ENCODE measurements at regions of chr6 and their contacts with region 1.

Region 1: DNA sequence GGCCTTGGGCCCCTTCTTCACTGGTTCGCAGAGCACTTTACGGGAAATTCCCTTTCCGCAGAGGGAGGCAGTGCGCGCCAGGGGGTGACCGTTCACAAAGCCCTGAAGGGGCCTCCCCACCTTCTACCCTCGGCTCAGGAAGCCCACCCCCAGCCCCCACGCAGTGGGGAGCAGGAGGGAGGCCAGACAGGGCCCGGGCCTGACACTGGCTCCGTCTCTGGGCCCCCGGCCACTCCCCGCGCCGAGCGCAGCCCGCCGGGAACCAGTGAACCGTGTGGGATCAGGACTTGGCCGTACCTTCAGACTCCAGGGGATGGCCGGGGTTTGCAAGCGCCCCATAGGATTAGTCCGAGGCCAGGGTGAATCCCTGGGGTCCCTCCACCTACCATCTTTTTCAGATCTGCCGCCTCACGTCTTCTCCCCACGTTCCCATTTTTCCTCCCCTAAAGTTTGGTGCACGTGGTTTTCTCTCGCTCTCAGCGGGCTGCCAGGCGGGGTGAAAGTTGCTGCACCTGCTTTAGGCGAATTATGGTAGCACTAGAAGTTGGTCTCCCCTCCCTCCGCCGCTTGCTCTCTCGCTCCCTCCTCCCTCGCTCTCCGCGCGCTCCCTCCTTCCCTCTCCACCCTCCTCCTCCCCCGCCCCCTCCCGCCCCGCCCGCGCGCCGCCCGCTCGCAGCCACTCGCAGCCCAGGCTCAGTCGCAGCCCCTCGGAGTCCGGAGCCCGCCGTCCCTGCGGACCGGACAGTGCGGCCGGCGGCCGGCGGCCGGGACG is at the start of gene FOXP4:
- DNase-seq: peak; percentile 90 to 93 (median 93)
- ATAC-seq: peak; percentile 88 to 94 (median 93)
- H3K4me3 ChIP-seq: peak within 1 kb of the TSS; percentile 51 to 97 (median 80)
- H3K27ac ChIP-seq: peak within 1 kb of the TSS; percentile 25 to 89 (median 79)
- H3K4me1 ChIP-seq: peaks cover 4 to 48% (median 20%) of the 10 kb centered on the region in 12 donors
- H3K27me3 ChIP-seq: peaks cover 0 to 20% (median 0%) of the 10 kb centered on the region in 9 donors
- CTCF ChIP-seq: no peak
- POLR2A ChIP-seq: no peak
- total RNA-seq, gene FOXP4: 11.3 to 22.5 (median 16.0) TPM

Region 2: GRCh38 chr6:41488433-41489119 is 57.3 kb before region 1 on chr6:
- intact Hi-C with region 1: no loop called
- DNase-seq: peak in 2 of 5 donors; percentile 41 to 42
- ATAC-seq: peak in 3 of 4 donors; percentile 53 to 84 (median 71)
- H3K4me3 ChIP-seq: no peak overlapping the region
- H3K27ac ChIP-seq: no peak overlapping the region
- H3K4me1 ChIP-seq: peaks cover 0 to 9% (median 1%) of the 10 kb centered on the region in 12 donors
- H3K27me3 ChIP-seq: peaks cover 0 to 7% (median 0%) of the 10 kb centered on the region in 9 donors
- CTCF ChIP-seq: no peak
- POLR2A ChIP-seq: no peak

Region 3: DNA sequence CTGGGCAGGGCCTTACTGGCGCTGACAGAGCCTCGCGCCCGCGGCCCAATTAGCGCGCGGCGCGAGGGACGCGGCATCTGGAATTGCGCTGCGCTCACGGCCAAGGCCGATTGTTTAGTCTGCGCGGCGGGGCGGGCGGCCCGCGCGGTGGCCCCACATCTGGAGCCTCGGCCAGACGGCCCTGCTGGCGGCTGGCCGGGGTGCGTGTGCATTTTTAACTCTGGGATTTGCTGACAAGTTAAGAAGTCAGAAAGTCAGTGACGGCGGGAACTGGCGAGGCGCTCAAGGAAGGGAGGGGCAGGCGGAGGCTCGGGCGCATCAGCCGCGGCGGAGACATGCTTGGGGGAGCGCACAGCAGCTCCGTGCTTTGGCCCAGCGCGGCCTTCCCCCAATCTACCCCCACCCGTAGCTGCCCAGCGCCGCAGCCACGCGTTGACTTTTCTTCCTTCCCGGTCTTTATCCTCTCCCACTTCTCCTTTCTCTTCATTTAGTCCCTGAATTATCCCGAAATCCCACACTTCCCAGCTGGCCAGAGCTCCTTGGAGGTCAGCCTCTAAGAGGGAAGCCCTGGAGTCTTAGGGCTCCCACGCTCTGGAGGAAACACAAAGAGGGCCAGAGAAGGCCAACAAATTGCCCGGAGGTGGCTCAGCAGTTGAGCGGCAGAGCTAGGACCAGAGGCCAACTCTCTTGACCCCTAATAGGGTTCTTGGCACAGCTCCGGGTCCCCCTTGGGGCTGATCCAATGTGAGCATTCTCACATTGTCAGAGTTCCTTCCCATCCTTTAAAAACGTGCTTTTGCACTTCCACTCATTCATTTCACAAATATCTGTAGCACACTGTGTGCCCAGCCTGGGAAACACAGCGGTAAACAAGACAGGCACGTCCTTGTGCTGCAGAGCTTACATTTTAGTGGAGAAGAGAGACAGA is 40.5 kb before region 1 on chr6:
- intact Hi-C with region 1: loop called in 1 of 10 experiments (anchors 5 kb)
- DNase-seq: peak; percentile 77 to 89 (median 81)
- ATAC-seq: peak; percentile 65 to 87 (median 76)
- H3K4me3 ChIP-seq: peak overlapping the region in 11 of 12 donors; percentile 6 to 58 (median 45)
- H3K27ac ChIP-seq: peak overlapping the region; percentile 32 to 90 (median 56)
- H3K4me1 ChIP-seq: peaks cover 0 to 27% (median 17%) of the 10 kb centered on the region in 12 donors
- H3K27me3 ChIP-seq: peaks cover 0 to 49% (median 6%) of the 10 kb centered on the region in 9 donors
- CTCF ChIP-seq: no peak
- POLR2A ChIP-seq: no peak

Region 4: DNA sequence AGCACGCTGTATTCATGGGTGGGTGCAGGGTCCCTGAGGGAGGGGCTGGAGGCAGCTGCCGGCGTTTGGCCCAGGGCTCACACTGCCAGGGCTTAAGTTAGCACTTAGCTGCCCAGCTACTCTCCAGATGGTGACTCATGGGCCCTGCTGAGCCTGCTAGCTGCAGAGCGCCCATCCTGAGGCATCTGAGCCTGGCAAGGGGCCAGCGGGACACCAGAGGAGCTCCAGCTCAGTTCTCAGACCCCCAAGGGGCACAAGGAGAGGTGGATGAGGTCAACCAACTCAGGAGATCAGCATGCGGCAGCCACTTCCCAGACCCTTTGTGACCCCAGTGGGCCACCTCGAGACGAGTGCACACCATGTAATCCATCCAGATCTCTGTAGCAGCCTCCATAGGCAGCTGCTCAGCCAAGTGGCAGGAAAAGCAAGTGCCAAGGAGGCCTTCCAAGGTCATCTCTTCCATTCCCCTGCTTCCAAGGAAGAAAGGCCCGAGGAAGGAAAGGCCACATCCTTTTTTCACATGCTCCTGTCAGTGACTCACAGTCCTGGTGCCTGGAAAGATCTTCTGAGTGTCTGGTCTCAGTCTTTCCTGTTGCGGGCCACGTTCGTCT is 35.6 kb after region 1 on chr6:
- intact Hi-C with region 1: loop called in 3 of 10 experiments (anchors 5 kb)
- DNase-seq: peak in 4 of 5 donors; percentile 35 to 80 (median 76)
- ATAC-seq: peak; percentile 6 to 78 (median 61)
- H3K4me3 ChIP-seq: no peak overlapping the region
- H3K27ac ChIP-seq: peak overlapping the region in 4 of 12 donors; percentile 17 to 47 (median 32)
- H3K4me1 ChIP-seq: peaks cover 0 to 67% (median 19%) of the 10 kb centered on the region in 12 donors
- H3K27me3 ChIP-seq: no peaks in the 10 kb centered on the region
- CTCF ChIP-seq: no peak
- POLR2A ChIP-seq: no peak

Region 5: GRCh38 chr6:41591859-41592502 is 46.1 kb after region 1 on chr6:
- intact Hi-C with region 1: no loop called
- DNase-seq: peak in 4 of 5 donors; percentile 58 to 71 (median 64)
- ATAC-seq: peak; percentile 54 to 71 (median 60)
- H3K4me3 ChIP-seq: no peak overlapping the region
- H3K27ac ChIP-seq: no peak overlapping the region
- H3K4me1 ChIP-seq: no peaks in the 10 kb centered on the region
- H3K27me3 ChIP-seq: no peaks in the 10 kb centered on the region
- CTCF ChIP-seq: peak; percentile 80 to 96 (median 91)
- POLR2A ChIP-seq: peak in 1 of 2 donors; percentile 14